Vagina (tissue), 2 donors: ENCODE measurements at regions of chr9 and their contacts with region 1.

Region 1: DNA sequence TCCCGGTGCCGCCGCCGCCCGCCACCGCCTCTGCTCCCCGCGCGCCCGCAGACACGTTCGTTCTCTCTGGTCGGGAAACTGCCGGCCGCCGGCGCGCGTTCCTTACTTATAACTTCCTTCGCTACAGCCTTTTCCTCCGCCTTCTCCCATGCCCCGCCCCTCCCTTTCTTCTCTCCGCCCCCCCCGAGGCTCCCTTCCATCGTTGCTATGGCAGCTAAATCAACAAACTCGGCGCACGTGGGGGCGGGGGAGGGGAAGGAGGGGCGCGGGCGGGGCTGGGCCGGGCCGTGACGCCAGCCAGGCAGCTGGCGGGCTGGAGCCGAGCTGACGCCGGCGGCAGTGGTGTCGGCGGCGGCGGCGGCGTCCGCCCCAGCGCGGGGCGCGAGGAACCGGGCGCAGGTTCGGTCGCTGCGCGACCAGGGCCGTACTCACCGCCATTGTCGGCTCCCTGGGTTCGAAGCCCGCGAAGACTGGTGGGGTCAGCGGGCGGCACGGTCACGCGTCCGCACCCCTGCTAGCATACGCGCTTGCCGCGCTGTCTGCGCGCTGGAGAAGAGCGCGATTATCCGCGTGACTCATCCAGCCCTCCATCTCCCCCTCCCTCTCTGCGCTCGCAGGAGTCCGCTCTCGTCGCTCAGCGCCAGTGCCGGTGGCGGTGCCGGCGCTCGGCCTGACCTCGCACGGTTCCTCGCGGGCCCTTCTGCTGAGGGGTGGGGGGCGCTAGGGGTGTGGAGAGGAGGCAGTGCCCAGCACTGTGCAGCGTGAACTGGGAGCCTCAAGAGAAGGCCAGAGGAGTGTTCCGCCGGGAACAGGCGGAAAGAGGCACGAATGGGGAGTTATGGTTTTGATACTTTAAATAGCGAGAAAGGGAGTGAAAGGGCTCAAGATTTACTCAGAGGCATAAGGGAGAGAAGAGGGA is at the start of gene KLF4:
- DNase-seq: peak in 1 of 2 donors; percentile 96
- H3K4me3 ChIP-seq: peak within 1 kb of the TSS; percentile 71 to 87
- H3K27ac ChIP-seq: peak within 1 kb of the TSS; percentile 96
- H3K4me1 ChIP-seq: peaks cover 25% of the 10 kb centered on the region
- H3K27me3 ChIP-seq: no peaks in the 10 kb centered on the region
- CTCF ChIP-seq: peak in 1 of 3 experiments; percentile 20
- POLR2A ChIP-seq: peak in 1 of 2 donors; percentile 69
- total RNA-seq, gene KLF4: 144 TPM

Region 2: DNA sequence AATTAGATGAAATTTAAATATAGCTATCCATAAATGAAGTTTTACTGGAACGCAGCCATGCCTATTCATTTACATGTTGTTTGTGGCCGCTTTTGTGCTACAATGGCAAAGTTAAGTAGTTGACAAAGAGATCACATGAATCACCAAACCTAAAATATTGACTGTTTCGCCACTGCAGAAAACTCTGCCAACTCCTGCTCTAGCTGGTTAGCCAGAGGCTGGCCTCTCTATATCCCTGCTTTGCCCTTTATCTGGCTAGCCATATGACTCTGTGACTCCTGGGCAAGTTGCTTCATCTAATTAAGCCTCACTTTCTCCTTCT is 92.3 kb before region 1 on chr9:
- intact Hi-C with region 1: no loop called
- DNase-seq: no peak
- H3K4me3 ChIP-seq: no peak overlapping the region
- H3K27ac ChIP-seq: no peak overlapping the region
- H3K4me1 ChIP-seq: peaks cover 14% of the 10 kb centered on the region
- H3K27me3 ChIP-seq: no peaks in the 10 kb centered on the region
- CTCF ChIP-seq: no peak
- POLR2A ChIP-seq: no peak

Region 3: DNA sequence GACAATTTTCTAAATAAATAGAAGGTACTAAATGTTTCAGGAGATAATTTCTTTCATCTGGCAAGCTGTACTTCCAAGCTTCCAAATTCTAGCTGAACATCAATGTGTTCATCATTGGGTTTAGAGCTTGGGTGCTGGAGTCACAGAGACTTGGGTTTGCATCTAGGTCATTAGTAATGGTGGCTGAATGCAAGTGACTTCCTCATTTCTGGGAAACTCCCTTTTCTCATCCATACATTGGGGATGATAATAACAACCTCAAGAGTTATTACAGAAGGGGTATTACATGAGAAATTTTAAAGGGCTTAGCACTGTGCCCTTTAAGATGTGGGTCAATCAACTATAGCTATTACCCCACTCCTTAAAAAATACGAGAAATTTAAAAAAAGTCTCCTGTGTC is 40.7 kb after region 1 on chr9:
- intact Hi-C with region 1: no loop called
- DNase-seq: no peak
- H3K4me3 ChIP-seq: no peak overlapping the region
- H3K27ac ChIP-seq: no peak overlapping the region
- H3K4me1 ChIP-seq: no peaks in the 10 kb centered on the region
- H3K27me3 ChIP-seq: no peaks in the 10 kb centered on the region
- CTCF ChIP-seq: no peak
- POLR2A ChIP-seq: no peak

Region 4: GRCh38 chr9:107637421-107638420 is 147.8 kb after region 1 on chr9:
- intact Hi-C with region 1: loop called (anchors 1 kb)
- DNase-seq: peak in 1 of 2 donors; percentile 97
- H3K4me3 ChIP-seq: peak overlapping the region; percentile 40 to 41
- H3K27ac ChIP-seq: peak overlapping the region; percentile 96
- H3K4me1 ChIP-seq: peaks cover 17% of the 10 kb centered on the region
- H3K27me3 ChIP-seq: no peaks in the 10 kb centered on the region
- CTCF ChIP-seq: peak in 1 of 3 experiments; percentile 6
- POLR2A ChIP-seq: peak in 1 of 2 donors; percentile 97

Region 5: GRCh38 chr9:107732781-107733522 is 243.0 kb after region 1 on chr9:
- intact Hi-C with region 1: loop called (anchors 10 kb)
- DNase-seq: no peak
- H3K4me3 ChIP-seq: peak overlapping the region; percentile 17 to 25
- H3K27ac ChIP-seq: peak overlapping the region; percentile 86
- H3K4me1 ChIP-seq: peaks cover 54% of the 10 kb centered on the region
- H3K27me3 ChIP-seq: no peaks in the 10 kb centered on the region
- CTCF ChIP-seq: no peak
- POLR2A ChIP-seq: no peak

Region 6: DNA sequence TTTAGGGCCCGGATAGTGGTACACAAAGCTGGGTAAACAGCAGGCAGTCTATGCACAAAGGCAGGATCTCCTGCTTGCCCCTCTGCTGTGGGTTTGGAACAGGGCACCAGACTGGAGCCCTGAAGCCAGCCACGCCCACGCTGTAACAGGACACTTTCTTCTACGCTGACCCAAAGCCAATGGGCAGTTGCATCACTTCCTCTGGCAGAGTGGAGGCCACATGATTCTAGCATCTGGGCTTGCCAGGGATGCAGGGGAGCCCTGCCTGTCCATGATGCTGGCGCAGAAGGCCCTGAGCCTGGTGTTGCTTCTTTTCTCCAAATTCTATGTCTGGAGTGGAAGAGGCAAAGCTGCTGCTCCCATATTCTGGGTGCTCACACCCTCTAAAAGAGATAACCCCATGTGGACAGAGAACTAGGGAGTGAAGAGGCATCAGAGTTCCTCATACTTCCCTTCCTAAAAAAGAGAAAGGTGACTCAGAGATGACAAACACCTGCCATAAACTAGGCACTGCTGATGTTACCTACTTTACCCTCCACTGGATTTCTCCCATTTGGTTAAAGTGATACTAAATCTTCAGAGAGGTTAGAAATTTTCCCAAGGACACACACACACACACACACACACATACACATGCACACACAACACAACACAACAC is 260.0 kb after region 1 on chr9:
- intact Hi-C with region 1: loop called (anchors 5 kb)
- DNase-seq: peak in 1 of 2 donors; percentile 97
- H3K4me3 ChIP-seq: no peak overlapping the region
- H3K27ac ChIP-seq: peak overlapping the region; percentile 81
- H3K4me1 ChIP-seq: peaks cover 35% of the 10 kb centered on the region
- H3K27me3 ChIP-seq: no peaks in the 10 kb centered on the region
- CTCF ChIP-seq: no peak
- POLR2A ChIP-seq: no peak

Region 7: GRCh38 chr9:108272349-108272899 is 782.5 kb after region 1 on chr9:
- intact Hi-C with region 1: loop called (anchors 10 kb)
- DNase-seq: no peak
- H3K4me3 ChIP-seq: peak overlapping the region; percentile 12 to 27
- H3K27ac ChIP-seq: peak overlapping the region; percentile 78
- H3K4me1 ChIP-seq: peaks cover 23% of the 10 kb centered on the region
- H3K27me3 ChIP-seq: no peaks in the 10 kb centered on the region
- CTCF ChIP-seq: peak in 2 of 3 experiments; percentile 35 to 53
- POLR2A ChIP-seq: no peak

Region 8: GRCh38 chr9:108511307-108511706 is 1021.4 kb after region 1 on chr9:
- intact Hi-C with region 1: no loop called
- DNase-seq: no peak
- H3K4me3 ChIP-seq: no peak overlapping the region
- H3K27ac ChIP-seq: no peak overlapping the region
- H3K4me1 ChIP-seq: no peaks in the 10 kb centered on the region
- H3K27me3 ChIP-seq: no peaks in the 10 kb centered on the region
- CTCF ChIP-seq: no peak
- POLR2A ChIP-seq: no peak